A549 (cell line): ENCODE measurements at regions of chr12 and their contacts with region 1.

Region 1: GRCh38 chr12:6167327-6168259 is 32.6 kb upstream of the CD9 start:
- DNase-seq: peak; percentile 44 to 61
- ATAC-seq: peak; percentile 89 to 92
- H3K4me3 ChIP-seq: no peak overlapping the region
- H3K27ac ChIP-seq: peak overlapping the region; percentile 36 to 79; a peak in 5 of 6 replicates
- H3K4me1 ChIP-seq: peaks cover 16% of the 10 kb centered on the region
- CTCF ChIP-seq: no peak
- EP300 ChIP-seq: no peak
- POLR2A ChIP-seq: no peak
- RAD21 ChIP-seq: no peak

Region 2: GRCh38 chr12:6112004-6112403 is 55.6 kb before region 1 on chr12:
- CTCF ChIA-PET with region 1: no interaction called
- POLR2A ChIA-PET with region 1: interaction called, 17 read pairs
- DNase-seq: no peak
- ATAC-seq: no peak
- H3K4me3 ChIP-seq: no peak overlapping the region
- H3K27ac ChIP-seq: no peak overlapping the region
- H3K4me1 ChIP-seq: peaks cover 4% of the 10 kb centered on the region; the same call in 1 of the 3 replicates
- CTCF ChIP-seq: no peak
- EP300 ChIP-seq: no peak
- POLR2A ChIP-seq: no peak
- RAD21 ChIP-seq: no peak